Dendritic cell treated with granulocyte-macrophage colony-stimulating factor and Interleukin-4, amounts not matched to agents 40 ng/mL and 50 ng/mL, for 4 days (primary cell): ENCODE measurements at regions of chr5 and their contacts with region 1.

Region 1: DNA sequence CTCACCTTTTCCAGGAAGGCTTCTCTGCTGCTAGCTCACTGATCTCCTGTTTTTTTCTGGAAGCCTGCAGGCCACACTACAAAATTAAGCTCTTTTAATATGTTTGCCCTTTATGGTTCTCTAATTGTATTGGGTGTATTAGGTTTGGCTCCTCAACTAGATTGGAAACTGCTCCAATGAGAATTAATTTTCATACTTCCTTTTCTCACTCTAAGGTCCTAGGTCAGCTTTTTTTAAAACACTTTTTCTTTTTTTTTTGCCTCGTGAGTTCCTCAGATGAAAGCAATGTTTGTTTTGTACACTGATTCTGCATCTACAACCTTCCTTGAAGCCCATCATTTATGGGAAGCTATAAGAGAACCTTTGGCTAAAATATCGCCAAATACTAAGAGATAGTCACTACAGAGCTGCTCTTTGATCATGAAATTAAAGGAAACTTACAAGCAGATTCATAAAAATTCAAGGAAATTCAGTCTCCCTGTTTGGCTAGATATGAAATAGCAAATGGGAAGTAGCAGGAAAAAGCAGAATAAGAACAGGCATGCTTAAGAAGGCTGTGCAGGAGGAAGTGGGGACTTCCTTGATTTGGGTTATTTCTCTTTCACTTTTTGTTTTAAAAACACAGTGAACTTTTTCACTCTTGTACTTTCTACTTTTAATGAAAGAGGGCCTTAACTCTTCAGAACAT is 55.2 kb upstream of the FYB1 start:
- H3K4me3 Mint-ChIP-seq: peak overlapping the region; percentile 71
- H3K27ac Mint-ChIP-seq: peak overlapping the region; percentile 88
- H3K4me1 Mint-ChIP-seq: peaks cover 31% of the 10 kb centered on the region
- H3K27me3 Mint-ChIP-seq: no peaks in the 10 kb centered on the region

Region 2: GRCh38 chr5:39217365-39218281 is 56.9 kb before region 1 on chr5:
- intact Hi-C with region 1: loop called (anchors 2 kb)
- H3K4me3 Mint-ChIP-seq: peak overlapping the region; percentile 50
- H3K27ac Mint-ChIP-seq: peak overlapping the region; percentile 91
- H3K4me1 Mint-ChIP-seq: peaks cover 79% of the 10 kb centered on the region
- H3K27me3 Mint-ChIP-seq: no peaks in the 10 kb centered on the region

Region 3: GRCh38 chr5:39256477-39257235 is 17.9 kb before region 1 on chr5:
- intact Hi-C with region 1: loop called (anchors 2 kb)
- H3K4me3 Mint-ChIP-seq: peak overlapping the region; percentile 59
- H3K27ac Mint-ChIP-seq: peak overlapping the region; percentile 89
- H3K4me1 Mint-ChIP-seq: peaks cover 60% of the 10 kb centered on the region
- H3K27me3 Mint-ChIP-seq: no peaks in the 10 kb centered on the region

Region 4: GRCh38 chr5:39264528-39264927 is 10.0 kb before region 1 on chr5:
- intact Hi-C with region 1: loop called (anchors 1 kb)
- H3K4me3 Mint-ChIP-seq: no peak overlapping the region
- H3K27ac Mint-ChIP-seq: peak overlapping the region; percentile 15
- H3K4me1 Mint-ChIP-seq: peaks cover 73% of the 10 kb centered on the region
- H3K27me3 Mint-ChIP-seq: no peaks in the 10 kb centered on the region

Region 5: GRCh38 chr5:39314591-39314990 is 40.0 kb after region 1 on chr5:
- intact Hi-C with region 1: no loop called
- H3K4me3 Mint-ChIP-seq: no peak overlapping the region
- H3K27ac Mint-ChIP-seq: no peak overlapping the region
- H3K4me1 Mint-ChIP-seq: no peaks in the 10 kb centered on the region
- H3K27me3 Mint-ChIP-seq: no peaks in the 10 kb centered on the region

Region 6: GRCh38 chr5:39437469-39437868 is 162.9 kb after region 1 on chr5:
- intact Hi-C with region 1: no loop called
- H3K4me3 Mint-ChIP-seq: no peak overlapping the region
- H3K27ac Mint-ChIP-seq: no peak overlapping the region
- H3K4me1 Mint-ChIP-seq: peaks cover 24% of the 10 kb centered on the region
- H3K27me3 Mint-ChIP-seq: peaks cover 1% of the 10 kb centered on the region